ENCODE measurements at regions of chr17 and their contacts with region 1.

Region 1: DNA sequence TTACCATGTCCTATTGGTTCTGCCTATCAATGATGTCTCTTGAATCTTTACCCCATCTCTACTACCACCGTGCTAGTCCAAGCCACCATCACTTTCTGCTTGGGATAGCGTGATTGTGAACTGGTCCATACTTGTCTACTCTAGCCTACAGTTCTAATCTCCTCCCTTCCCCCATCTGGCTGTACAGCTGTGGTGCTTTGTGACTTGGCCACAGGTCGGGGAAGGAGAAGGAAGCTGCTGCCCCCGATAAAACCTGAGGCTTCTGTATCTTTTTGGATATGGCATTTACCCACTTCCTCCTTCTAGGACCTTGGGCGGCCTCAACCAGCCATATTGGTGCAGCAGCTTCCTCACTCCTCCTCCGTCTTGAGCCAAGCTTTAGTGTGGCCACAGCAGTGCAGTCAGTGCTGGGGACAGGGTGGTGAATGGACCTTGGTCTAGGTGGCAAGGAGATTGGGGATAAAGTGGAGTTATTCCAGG is 314 bp upstream of the ITGA2B start:
- DNase-seq: no peak
- H3K4me3 ChIP-seq: no peak overlapping the region
- H3K27ac ChIP-seq: no peak overlapping the region
- H3K27me3 ChIP-seq: no peaks in the 10 kb centered on the region
- CTCF ChIP-seq: no peak

Region 2: GRCh38 chr17:44487170-44487569 is 97.4 kb after region 1 on chr17:
- intact Hi-C with region 1: loop called in 1 of 2 experiments (anchors 10 kb)
- DNase-seq: no peak
- H3K4me3 ChIP-seq: no peak overlapping the region
- H3K27ac ChIP-seq: no peak overlapping the region
- H3K27me3 ChIP-seq: no peaks in the 10 kb centered on the region
- CTCF ChIP-seq: no peak

Region 3: DNA sequence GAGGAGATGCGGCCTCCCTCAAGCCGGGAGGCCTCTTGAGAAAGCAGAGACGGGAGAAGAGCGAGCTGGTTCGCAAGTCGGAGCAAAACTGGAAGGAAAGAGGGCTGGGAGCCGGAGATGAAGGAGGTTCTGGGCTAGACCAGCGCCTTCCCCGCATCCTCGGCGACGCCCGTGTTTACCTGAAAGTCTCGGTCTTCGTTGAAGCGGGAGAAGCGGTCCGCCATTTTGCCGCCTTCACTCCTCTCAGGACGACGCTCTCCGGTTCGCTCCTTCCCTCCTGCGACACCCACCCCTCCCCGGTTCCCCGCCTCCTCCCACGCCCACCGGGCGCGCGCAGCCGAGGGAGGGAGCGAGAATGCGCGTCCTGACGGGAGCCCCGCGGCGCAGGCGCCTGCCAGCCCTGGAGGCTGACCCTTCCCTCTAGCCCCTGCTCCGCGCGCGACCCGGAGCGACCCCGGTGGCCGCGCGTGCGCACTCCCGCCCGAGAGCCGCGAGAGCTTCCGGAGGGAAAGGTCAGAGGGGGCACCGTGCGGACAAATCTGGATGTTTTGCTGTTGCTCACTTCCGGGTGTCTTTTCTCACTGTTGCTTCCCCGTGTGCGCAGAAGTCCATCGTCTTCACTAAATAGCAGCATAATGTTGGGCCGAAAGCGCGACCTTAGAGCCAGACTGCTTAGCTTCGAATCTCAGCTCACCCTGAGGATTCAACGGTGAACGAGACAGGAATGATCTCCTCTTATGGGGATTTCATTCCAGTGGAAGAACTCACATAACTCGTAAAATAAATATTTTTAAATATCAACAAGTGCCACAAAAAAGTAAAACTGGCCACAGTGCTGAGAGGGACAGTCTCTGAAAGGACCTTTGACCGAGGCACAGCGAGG is 113.6 kb after region 1 on chr17 and contains the start of gene GPATCH8:
- intact Hi-C with region 1: loop called in 1 of 2 experiments (anchors 10 kb)
- DNase-seq: peak; percentile 84 to 97 (median 86)
- H3K4me3 ChIP-seq: peak within 1 kb of the TSS; percentile 63 to 99 (median 92)
- H3K27ac ChIP-seq: peak within 1 kb of the TSS; percentile 13 to 96 (median 89)
- H3K27me3 ChIP-seq: peaks cover 0 to 9% (median 0%) of the 10 kb centered on the region in 45 donors
- CTCF ChIP-seq: peak in 33 of 56 donors; percentile 2 to 52 (median 24)
- total RNA-seq, gene GPATCH8: 53.8 to 111 (median 82.5) TPM